A673 (cell line): ENCODE measurements at regions of chr3 and their contacts with region 1.

Region 1: GRCh38 chr3:161274719-161275298 is 53.7 kb downstream of the NMD3 start:
- DNase-seq: peak; percentile 82
- H3K4me3 ChIP-seq: no peak overlapping the region
- H3K27ac ChIP-seq: no peak overlapping the region
- H3K4me1 ChIP-seq: no peaks in the 10 kb centered on the region
- H3K27me3 ChIP-seq: no peaks in the 10 kb centered on the region
- CTCF ChIP-seq: peak; percentile 85

Region 2: DNA sequence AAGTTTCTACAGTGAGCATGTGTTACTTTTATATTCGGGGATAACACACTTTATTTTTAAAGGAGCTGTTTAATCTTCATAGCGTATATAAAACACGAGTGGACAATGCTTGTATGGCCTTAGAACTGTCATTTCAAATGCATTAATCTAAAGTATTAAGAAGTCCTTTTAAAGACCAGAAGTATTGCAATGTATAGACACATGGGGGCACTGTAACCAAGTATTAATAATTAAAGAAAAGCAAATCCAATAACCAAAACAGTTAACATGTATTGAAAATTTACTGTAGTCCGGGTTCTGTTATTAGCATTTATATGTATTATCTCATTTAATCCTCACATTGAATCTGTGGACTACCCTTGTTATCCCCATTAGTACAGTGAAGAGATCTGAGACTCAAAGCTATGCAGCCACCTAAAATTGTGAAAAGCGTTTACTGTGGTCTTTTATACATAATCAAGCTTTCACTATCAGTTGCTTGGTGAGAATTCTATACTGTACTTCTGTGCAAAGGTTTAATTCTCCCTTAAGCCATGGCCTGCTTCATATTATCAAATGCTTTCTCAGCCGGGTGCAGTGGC is 587.8 kb before region 1 on chr3:
- CTCF ChIA-PET with region 1: no interaction called
- POLR2A ChIA-PET with region 1: no interaction called
- intact Hi-C with region 1: loop called (anchors 5 kb)
- DNase-seq: peak; percentile 31
- H3K4me3 ChIP-seq: no peak overlapping the region
- H3K27ac ChIP-seq: no peak overlapping the region
- H3K4me1 ChIP-seq: no peaks in the 10 kb centered on the region
- H3K27me3 ChIP-seq: no peaks in the 10 kb centered on the region
- CTCF ChIP-seq: peak; percentile 61

Region 3: DNA sequence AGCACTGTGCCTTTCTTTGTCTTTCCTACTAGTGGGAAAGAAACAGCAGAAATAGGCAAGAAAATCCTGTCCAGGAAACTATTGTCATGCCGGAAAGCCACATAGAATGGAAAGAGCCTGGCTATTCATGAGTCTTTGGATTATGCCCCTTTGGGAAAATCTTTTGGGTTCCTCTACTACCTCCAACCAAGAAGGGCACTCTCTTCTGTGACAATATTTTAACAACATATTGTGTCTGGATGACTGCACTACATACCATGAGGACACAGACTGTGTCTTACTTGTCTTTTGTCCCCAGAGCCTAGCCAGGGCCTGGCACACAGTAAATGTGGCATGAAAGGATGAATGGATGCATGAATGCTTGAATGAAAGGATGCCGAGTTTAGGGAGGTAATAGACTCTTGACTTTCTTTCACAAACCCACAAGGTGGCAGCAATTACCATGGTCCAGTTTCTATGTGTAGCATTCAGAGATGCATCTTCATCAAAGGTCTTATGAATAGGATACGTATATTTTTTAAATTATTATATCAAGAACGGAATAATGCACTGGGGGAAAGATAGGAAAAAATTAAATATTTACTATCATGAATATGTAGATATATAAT is 567.5 kb before region 1 on chr3:
- CTCF ChIA-PET with region 1: interaction called, 3 read pairs
- POLR2A ChIA-PET with region 1: no interaction called
- intact Hi-C with region 1: loop called (anchors 5 kb)
- DNase-seq: peak; percentile 52
- H3K4me3 ChIP-seq: no peak overlapping the region
- H3K27ac ChIP-seq: no peak overlapping the region
- H3K4me1 ChIP-seq: no peaks in the 10 kb centered on the region
- H3K27me3 ChIP-seq: peaks cover 3% of the 10 kb centered on the region
- CTCF ChIP-seq: peak; percentile 58

Region 4: DNA sequence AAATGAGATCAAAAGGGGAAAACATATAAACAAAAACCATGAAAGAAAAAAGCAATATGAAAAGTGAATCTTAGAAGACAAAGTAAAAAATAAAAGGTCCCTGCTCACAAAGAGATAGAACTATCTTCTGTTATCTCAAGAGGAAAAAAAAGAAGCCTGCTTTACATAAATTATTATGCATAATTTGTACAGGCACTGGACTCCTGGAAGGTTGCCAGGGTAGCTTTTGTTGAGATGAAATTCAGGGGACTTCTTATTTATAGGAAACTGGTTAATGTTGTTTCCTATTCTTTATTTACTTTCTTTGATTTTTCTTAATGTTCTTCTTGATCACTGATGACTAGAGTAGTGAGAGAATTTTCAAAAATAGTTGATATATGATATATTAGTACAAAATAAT is 451.9 kb before region 1 on chr3:
- CTCF ChIA-PET with region 1: no interaction called
- POLR2A ChIA-PET with region 1: no interaction called
- intact Hi-C with region 1: no loop called
- DNase-seq: peak; percentile 43
- H3K4me3 ChIP-seq: no peak overlapping the region
- H3K27ac ChIP-seq: no peak overlapping the region
- H3K4me1 ChIP-seq: peaks cover 6% of the 10 kb centered on the region
- H3K27me3 ChIP-seq: no peaks in the 10 kb centered on the region
- CTCF ChIP-seq: no peak

Region 5: GRCh38 chr3:160941885-160942494 is 332.8 kb before region 1 on chr3:
- CTCF ChIA-PET with region 1: no interaction called
- POLR2A ChIA-PET with region 1: no interaction called
- intact Hi-C with region 1: loop called (anchors 10 kb)
- DNase-seq: peak; percentile 79
- H3K4me3 ChIP-seq: no peak overlapping the region
- H3K27ac ChIP-seq: no peak overlapping the region
- H3K4me1 ChIP-seq: peaks cover 5% of the 10 kb centered on the region
- H3K27me3 ChIP-seq: no peaks in the 10 kb centered on the region
- CTCF ChIP-seq: peak; percentile 81

Region 6: DNA sequence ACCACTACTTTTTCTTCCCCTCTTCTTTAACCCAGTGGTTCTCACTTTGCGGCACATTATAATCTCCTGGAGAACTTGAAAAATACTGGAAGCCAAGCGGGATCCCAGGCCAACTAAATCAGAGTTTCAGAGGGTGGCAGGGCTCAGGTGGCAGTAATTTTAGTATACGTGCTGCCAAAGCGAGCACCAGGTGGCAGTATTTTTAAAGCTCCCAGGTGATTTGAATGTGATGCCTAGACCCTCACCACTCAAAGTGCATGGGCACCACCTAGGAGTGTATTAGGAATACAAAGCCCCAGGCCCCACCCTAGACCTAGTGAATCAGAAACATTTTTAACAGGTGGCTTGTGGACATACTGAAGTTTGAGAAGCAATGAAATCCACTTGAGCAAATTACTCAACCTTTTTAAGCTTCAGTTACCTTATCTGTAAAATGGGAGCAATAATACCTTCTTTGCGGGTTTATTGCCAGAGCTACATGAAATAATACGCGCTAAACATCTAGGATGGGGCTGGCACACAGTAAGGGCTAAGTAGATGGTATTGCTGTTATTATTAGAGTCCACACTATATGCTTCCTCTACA is 177.9 kb before region 1 on chr3:
- CTCF ChIA-PET with region 1: no interaction called
- POLR2A ChIA-PET with region 1: no interaction called
- intact Hi-C with region 1: loop called (anchors 5 kb)
- DNase-seq: no peak
- H3K4me3 ChIP-seq: no peak overlapping the region
- H3K27ac ChIP-seq: no peak overlapping the region
- H3K4me1 ChIP-seq: no peaks in the 10 kb centered on the region
- H3K27me3 ChIP-seq: no peaks in the 10 kb centered on the region
- CTCF ChIP-seq: peak; percentile 34; the same call in 1 of the 2 replicates

Region 7: GRCh38 chr3:161409069-161409468 is 134.3 kb after region 1 on chr3:
- CTCF ChIA-PET with region 1: no interaction called
- POLR2A ChIA-PET with region 1: no interaction called
- intact Hi-C with region 1: loop called (anchors 2 kb)
- DNase-seq: peak; percentile 74
- H3K4me3 ChIP-seq: no peak overlapping the region
- H3K27ac ChIP-seq: no peak overlapping the region
- H3K4me1 ChIP-seq: no peaks in the 10 kb centered on the region
- H3K27me3 ChIP-seq: no peaks in the 10 kb centered on the region
- CTCF ChIP-seq: peak; percentile 64

Region 8: GRCh38 chr3:161423911-161424522 is 149.2 kb after region 1 on chr3:
- CTCF ChIA-PET with region 1: interaction called, 3 read pairs
- POLR2A ChIA-PET with region 1: no interaction called
- intact Hi-C with region 1: loop called (anchors 2 kb)
- DNase-seq: peak; percentile 64
- H3K4me3 ChIP-seq: no peak overlapping the region
- H3K27ac ChIP-seq: no peak overlapping the region
- H3K4me1 ChIP-seq: no peaks in the 10 kb centered on the region
- H3K27me3 ChIP-seq: no peaks in the 10 kb centered on the region
- CTCF ChIP-seq: peak; percentile 72